HCT116 (cell line): ENCODE measurements at regions of chr20 and their contacts with region 1.

Region 1: DNA sequence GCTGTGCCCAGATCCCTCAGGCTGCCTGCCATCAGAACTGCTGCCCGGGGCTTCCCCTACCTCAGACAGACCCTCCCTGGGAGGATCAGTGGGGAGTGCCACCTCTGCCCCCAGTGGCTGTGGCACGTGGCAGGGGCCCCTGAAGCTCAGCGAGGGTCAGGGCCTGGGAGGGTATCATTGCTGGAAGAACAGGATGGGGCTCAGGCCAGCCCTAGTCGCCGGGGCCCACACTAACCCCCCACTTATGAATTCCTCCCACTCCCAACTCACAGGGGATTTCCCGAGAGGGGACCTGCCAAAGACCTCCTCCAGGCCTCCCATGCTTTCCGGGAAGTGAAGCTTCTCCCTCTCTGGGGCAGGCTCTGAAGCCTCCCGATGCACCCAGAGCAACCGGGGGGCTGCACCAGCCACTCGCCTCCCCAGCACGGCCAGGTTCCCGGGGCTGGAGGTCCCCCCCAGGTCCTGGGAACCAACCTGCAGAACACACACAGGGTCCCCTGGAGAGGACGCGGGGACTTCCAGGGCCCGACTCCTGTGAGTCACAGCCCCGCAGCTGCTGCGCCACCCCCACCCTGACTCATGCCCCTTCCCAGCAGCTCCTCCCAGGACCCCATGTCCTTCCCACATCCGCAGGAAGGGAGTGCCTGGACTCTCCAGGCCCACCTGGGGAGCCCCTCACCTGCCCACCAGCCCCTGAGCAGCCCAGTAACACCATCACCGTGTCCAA is 2.5 kb downstream of the TNFRSF6B start:
- DNase-seq: peak; percentile 67
- ATAC-seq: peak; percentile 58
- H3K4me3 ChIP-seq: peak overlapping the region; percentile 37 to 41
- H3K27ac ChIP-seq: peak overlapping the region; percentile 91
- H3K4me1 ChIP-seq: peaks cover 35 to 78% of the 10 kb centered on the region in 2 experiments
- H3K27me3 ChIP-seq: no peaks in the 10 kb centered on the region
- CTCF ChIP-seq: no peak
- POLR2A ChIP-seq: no peak
- RAD21 ChIP-seq: no peak

Region 2: DNA sequence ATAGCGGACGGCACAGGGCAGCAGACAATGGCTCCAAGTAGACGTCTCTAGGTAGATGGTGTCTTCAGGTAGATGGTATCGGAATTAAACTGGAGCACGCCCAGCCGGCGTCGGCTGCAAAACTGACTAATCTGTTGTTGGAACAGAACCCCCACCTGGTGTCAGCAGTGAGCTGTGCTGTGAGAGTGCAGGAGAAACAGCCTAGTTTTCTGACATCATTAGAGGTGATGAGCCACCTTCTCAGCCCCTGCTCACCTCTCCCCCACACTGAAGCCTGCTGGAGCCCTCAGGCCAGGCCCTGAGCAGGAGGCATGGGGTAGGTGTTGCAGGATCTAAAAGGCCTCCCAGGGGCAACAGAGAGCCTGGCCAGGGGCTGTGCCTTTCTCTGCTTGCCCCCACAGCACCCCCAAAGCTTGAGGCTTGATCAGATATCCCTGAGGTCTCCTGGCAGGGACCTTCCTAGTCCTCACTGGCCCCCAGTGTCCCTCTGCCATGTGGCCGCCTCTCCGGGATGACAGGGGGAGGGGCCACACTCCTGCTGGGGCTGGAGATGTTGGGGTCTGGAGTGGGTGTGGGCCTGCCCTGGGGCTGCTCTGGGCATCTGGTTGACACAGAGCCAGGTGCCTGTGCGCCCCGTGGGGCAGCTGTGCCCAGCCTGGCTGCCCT is 118.0 kb before region 1 on chr20:
- CTCF ChIA-PET with region 1: no interaction called
- POLR2A ChIA-PET with region 1: no interaction called
- RAD21 ChIA-PET with region 1: no interaction called
- intact Hi-C with region 1: loop called (anchors 5 kb)
- DNase-seq: peak; percentile 52
- ATAC-seq: peak; percentile 92
- H3K4me3 ChIP-seq: no peak overlapping the region
- H3K27ac ChIP-seq: no peak overlapping the region; the same call in 1 of the 2 replicates
- H3K4me1 ChIP-seq: peaks cover 0 to 8% of the 10 kb centered on the region in 2 experiments; a peak in 1 of 4 replicates
- H3K27me3 ChIP-seq: no peaks in the 10 kb centered on the region
- CTCF ChIP-seq: peak; percentile 54 to 61 (median 60); a peak in 5 of 6 replicates
- POLR2A ChIP-seq: no peak
- RAD21 ChIP-seq: peak; percentile 90

Region 3: DNA sequence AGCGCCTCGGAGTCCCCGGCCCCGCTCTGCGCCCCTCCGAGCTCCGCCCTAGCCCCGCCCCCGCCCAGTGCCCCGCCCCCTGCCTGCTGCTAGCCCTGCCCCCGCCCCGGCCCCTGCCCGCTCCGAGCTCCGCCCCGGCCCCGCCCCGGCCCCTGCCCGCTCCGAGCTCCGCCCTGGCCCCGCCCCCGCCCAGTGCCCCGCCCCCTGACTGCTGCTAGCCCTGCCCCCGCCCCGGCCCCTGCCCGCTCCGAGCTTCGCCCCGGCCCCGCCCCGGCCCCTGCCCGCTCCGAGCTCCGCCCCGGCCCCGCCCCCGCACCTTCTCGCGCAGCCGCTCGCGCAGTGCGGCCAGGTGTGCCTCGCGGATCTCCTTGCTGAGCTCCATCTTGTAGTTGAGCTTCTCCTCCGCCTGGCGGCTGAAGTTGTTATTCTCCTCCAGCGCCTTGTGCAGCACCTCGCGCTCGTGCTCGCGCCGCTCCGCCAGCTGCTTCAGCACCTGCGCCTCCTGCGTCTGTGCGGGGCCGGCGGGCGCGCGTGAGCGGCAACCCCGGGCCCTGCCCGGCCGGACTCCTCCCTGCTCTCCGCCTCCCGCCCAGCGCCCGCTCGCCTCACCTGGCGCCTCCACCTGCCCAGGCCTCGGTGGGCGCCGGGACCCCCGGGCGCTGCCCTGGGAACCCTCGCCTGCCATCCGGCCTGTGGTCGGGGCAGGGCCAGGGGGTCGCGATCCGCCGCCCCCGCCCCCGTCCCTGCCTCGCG is 56.9 kb before region 1 on chr20:
- CTCF ChIA-PET with region 1: interaction called, 4 read pairs
- POLR2A ChIA-PET with region 1: interaction called, 12 read pairs
- RAD21 ChIA-PET with region 1: no interaction called
- intact Hi-C with region 1: no loop called
- DNase-seq: peak; percentile 79
- ATAC-seq: peak; percentile 83
- H3K4me3 ChIP-seq: peak overlapping the region; percentile 40 to 59
- H3K27ac ChIP-seq: peak overlapping the region; percentile 98
- H3K4me1 ChIP-seq: peaks cover 11 to 34% of the 10 kb centered on the region in 2 experiments
- H3K27me3 ChIP-seq: no peaks in the 10 kb centered on the region
- CTCF ChIP-seq: peak in 2 of 3 experiments; percentile 36 to 52; a peak in 4 of 6 replicates
- POLR2A ChIP-seq: peak; percentile 30
- RAD21 ChIP-seq: no peak; the same call in 1 of the 2 replicates

Region 4: DNA sequence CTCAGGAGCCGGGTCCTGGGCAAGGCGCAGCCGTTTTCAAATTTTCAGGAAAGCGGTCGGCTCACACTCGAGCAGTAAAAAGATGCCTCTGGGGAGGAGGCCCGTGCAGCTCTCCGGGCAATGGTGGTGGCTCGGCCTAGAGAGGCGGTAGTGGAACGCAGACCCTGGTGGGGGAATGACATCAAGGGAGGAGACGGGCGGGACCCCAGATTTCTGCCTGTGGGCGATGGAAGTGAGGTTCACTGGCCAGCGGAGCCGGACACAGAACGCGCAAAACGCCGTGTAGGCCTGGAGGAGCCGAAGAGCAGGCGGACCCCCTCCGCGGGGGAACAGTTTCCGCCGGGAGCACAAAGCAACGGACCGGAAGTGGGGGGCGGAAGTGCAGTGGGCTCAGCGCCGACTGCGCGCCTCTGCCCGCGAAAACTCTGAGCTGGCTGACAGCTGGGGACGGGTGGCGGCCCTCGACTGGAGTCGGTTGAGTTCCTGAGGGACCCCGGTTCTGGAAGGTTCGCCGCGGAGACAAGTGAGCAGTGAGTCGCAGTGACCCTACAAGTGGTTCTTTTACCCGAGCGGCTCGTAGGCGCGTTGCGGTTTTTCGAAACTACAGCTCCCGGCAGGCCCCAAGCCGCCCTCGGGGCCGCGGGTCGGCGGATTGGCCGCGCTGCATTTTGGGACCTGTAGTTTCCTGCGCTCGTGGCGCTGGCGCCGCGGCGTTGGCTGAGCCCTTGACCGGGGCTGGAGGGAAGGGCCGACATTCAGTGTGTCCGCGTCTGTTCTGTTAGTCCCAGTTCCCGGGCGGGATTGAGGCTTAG is 40.8 kb before region 1 on chr20 and contains the start of gene RTEL1:
- CTCF ChIA-PET with region 1: no interaction called
- POLR2A ChIA-PET with region 1: interaction called, 7 read pairs
- RAD21 ChIA-PET with region 1: no interaction called
- intact Hi-C with region 1: loop called (anchors 2 kb)
- DNase-seq: peak; percentile 80
- ATAC-seq: peak; percentile 86
- H3K4me3 ChIP-seq: peak within 1 kb of the TSS; percentile 82 to 99
- H3K27ac ChIP-seq: peak within 1 kb of the TSS; percentile 73
- H3K4me1 ChIP-seq: peaks cover 16 to 41% of the 10 kb centered on the region in 2 experiments
- H3K27me3 ChIP-seq: no peaks in the 10 kb centered on the region
- CTCF ChIP-seq: no peak
- POLR2A ChIP-seq: no peak
- RAD21 ChIP-seq: no peak
- total RNA-seq, gene RTEL1: 58.0 TPM

Region 5: GRCh38 chr20:63682384-63683139 is 16.3 kb before region 1 on chr20:
- CTCF ChIA-PET with region 1: no interaction called
- POLR2A ChIA-PET with region 1: interaction called, 28 read pairs
- RAD21 ChIA-PET with region 1: interaction called in 1 of 2 experiments, 3 read pairs
- intact Hi-C with region 1: loop called (anchors 2 kb)
- DNase-seq: peak; percentile 97
- ATAC-seq: peak; percentile 91
- H3K4me3 ChIP-seq: peak overlapping the region; percentile 24 to 51
- H3K27ac ChIP-seq: peak overlapping the region; percentile 100
- H3K4me1 ChIP-seq: peaks cover 59 to 71% of the 10 kb centered on the region in 2 experiments
- H3K27me3 ChIP-seq: no peaks in the 10 kb centered on the region
- CTCF ChIP-seq: no peak
- POLR2A ChIP-seq: peak; percentile 49
- RAD21 ChIP-seq: no peak

Region 6: DNA sequence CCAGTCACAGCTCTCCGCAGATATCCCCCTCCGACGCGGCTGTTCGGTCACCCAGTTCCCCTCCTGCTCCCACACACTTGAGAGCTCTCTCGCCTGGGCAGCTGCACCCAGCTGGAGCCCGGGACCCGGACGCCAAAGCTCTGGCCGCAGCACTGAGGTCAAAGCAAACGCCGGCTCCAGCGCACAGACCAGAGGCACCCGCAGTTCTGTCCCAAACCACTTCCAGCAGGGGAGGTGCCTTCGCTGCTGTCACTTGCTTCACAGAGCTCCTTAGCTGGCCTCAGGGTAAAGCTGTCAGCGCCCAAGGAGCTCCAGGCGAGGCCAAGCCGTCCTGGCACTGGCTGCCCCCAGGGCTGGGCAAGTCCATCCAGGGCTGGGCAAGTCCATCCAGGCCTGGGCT is 68.6 kb after region 1 on chr20:
- CTCF ChIA-PET with region 1: no interaction called
- POLR2A ChIA-PET with region 1: no interaction called
- RAD21 ChIA-PET with region 1: no interaction called
- intact Hi-C with region 1: no loop called
- DNase-seq: no peak
- ATAC-seq: no peak
- H3K4me3 ChIP-seq: no peak overlapping the region
- H3K27ac ChIP-seq: no peak overlapping the region
- H3K4me1 ChIP-seq: no peaks in the 10 kb centered on the region
- H3K27me3 ChIP-seq: no peaks in the 10 kb centered on the region
- CTCF ChIP-seq: no peak
- POLR2A ChIP-seq: no peak
- RAD21 ChIP-seq: no peak

Region 7: GRCh38 chr20:63955827-63956663 is 257.1 kb after region 1 on chr20 and contains the start of gene UCKL1:
- CTCF ChIA-PET with region 1: no interaction called
- POLR2A ChIA-PET with region 1: interaction called, 3 read pairs
- RAD21 ChIA-PET with region 1: no interaction called
- intact Hi-C with region 1: loop called (anchors 5 kb)
- DNase-seq: peak; percentile 79
- ATAC-seq: peak; percentile 75
- H3K4me3 ChIP-seq: peak within 1 kb of the TSS; percentile 90 to 96
- H3K27ac ChIP-seq: peak within 1 kb of the TSS; percentile 99
- H3K4me1 ChIP-seq: peaks cover 17 to 60% of the 10 kb centered on the region in 2 experiments; a peak in 3 of 4 replicates
- H3K27me3 ChIP-seq: no peaks in the 10 kb centered on the region
- CTCF ChIP-seq: no peak
- POLR2A ChIP-seq: no peak
- RAD21 ChIP-seq: no peak
- total RNA-seq, gene UCKL1: 54.2 TPM